Caco-2 (cell line): ENCODE measurements at regions of chr4 and their contacts with region 1.

Region 1: DNA sequence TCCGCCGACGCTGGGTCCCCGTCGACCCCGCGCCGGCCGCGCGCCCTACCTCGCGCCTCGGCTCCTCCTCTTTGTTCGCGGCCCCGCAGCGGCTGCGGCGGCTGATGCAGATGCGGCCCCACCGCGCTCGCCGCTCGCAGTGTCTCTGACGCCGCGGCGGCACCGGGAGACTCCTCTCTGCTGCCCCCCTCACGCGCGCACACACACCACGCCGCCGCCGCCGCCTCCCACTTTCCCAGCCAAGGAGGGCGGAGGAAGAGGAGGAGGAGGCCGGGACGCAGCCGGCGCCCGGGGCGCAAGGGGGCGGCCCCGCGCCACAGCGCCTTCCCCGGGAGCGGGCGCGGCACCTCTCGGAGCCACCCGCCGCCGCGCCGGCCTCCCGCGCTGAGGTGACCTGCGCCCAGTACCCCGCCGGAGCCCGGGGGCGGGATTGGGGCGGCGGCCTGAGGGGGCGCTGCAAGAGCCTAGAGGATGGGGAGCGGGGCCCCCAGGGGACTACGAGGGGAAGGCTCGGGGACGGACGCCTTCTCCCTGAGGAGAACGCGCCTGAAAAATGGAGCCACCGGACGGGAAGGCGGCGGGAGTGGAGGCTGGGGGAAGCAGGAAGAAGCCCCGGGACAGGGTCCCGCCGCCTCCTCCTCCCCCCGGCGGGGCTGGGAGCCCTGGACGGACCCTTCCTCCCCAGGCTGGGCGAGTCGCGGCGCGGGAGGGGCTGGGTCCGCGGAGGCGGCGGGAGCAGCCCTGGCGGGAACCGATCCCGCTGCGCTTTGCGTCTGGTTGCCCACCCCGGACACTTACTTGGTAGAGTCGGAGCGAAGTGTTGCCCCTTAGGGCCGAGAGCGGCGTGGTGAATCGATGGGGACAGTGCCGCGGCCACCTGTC is at the start of gene SH3RF1:
- DNase-seq: peak; percentile 88 to 89
- H3K4me3 ChIP-seq: peak within 1 kb of the TSS; percentile 71
- H3K4me3 Mint-ChIP-seq: peak within 1 kb of the TSS; percentile 96
- H3K27ac Mint-ChIP-seq: peak within 1 kb of the TSS; percentile 95
- H3K4me1 ChIP-seq: peaks cover 43% of the 10 kb centered on the region
- H3K4me1 Mint-ChIP-seq: peaks cover 38% of the 10 kb centered on the region
- H3K27me3 ChIP-seq: no peaks in the 10 kb centered on the region
- H3K27me3 Mint-ChIP-seq: no peaks in the 10 kb centered on the region
- CTCF ChIP-seq: peak; percentile 20 to 35
- total RNA-seq, gene SH3RF1: 25.1 and 28.1 TPM in 2 replicates

Region 2: GRCh38 chr4:169069972-169070902 is 200.8 kb before region 1 on chr4:
- CTCF ChIA-PET with region 1: no interaction called
- POLR2A ChIA-PET with region 1: interaction called, 4 read pairs
- intact Hi-C with region 1: loop called (anchors 1 kb)
- DNase-seq: peak; percentile 90 to 93
- H3K4me3 ChIP-seq: no peak overlapping the region
- H3K4me3 Mint-ChIP-seq: peak overlapping the region; percentile 60
- H3K27ac Mint-ChIP-seq: peak overlapping the region; percentile 92
- H3K4me1 ChIP-seq: peaks cover 50% of the 10 kb centered on the region
- H3K4me1 Mint-ChIP-seq: peaks cover 30% of the 10 kb centered on the region
- H3K27me3 ChIP-seq: no peaks in the 10 kb centered on the region
- H3K27me3 Mint-ChIP-seq: no peaks in the 10 kb centered on the region
- CTCF ChIP-seq: no peak

Region 3: DNA sequence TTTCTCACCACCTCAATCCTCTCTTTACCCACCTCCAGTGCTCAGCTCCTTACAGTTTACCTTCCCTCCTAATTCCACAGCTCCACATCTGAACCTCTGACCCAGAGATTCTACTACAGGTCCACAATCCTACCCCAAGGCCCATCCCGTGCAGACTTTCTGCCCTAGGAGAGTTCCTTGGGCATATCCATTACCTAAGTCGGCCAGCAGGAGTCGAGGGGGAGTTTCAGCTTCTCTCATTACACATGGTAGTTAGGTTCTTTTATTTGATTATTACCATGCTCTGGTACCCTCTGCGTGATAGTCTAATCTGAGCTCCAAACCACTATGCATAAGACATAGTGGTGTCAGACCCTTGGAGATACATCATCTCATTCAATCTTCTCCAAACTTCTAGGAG is 118.2 kb before region 1 on chr4:
- CTCF ChIA-PET with region 1: no interaction called
- POLR2A ChIA-PET with region 1: no interaction called
- intact Hi-C with region 1: loop called (anchors 5 kb)
- DNase-seq: no peak
- H3K4me3 ChIP-seq: no peak overlapping the region
- H3K4me3 Mint-ChIP-seq: no peak overlapping the region
- H3K27ac Mint-ChIP-seq: peak overlapping the region; percentile 74
- H3K4me1 ChIP-seq: peaks cover 44% of the 10 kb centered on the region
- H3K4me1 Mint-ChIP-seq: peaks cover 19% of the 10 kb centered on the region
- H3K27me3 ChIP-seq: no peaks in the 10 kb centered on the region
- H3K27me3 Mint-ChIP-seq: no peaks in the 10 kb centered on the region
- CTCF ChIP-seq: no peak

Region 4: DNA sequence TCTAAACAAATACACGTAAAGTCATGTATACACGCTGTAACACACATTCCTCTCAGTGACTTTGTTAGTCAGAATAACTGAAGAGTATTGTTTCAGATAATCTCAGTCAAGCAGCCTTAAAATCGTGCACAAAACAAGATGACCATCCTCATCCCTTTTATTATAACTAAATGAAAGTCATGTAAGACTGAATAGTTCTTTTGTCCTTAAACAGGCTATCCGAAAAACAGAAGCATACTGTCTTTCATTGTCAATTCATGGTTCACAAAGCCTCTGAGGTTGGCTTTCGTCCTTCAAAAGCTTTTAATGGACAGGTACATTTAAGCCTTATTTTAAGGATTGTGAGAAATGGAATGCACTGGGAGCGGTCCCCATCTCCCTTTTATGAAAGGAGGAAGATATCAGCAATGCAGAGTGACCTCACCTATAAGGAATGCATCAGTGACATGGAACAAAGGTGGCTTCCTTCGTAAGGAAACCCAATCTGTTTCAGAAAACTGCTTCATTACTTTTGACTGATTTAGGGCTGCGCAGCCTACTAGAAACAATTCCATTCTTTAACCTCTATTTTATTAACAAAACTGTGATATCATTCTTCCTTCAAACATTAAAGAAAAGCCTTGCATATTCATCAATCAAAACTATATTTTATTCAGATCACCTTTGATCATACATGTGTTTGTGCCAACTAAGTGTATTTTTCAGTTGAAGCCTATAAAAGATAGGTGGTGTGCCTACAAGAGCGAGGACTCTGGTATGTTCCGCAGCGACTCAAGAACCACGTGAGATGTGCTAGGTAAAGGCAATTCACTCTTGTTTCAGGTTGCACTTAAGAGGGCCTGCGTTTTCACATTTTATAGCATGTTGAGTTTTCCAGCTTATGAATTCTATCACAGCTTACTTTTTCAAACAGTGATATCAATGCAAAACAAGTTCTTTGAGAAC is 19.5 kb before region 1 on chr4:
- CTCF ChIA-PET with region 1: no interaction called
- POLR2A ChIA-PET with region 1: interaction called, 5 read pairs
- intact Hi-C with region 1: loop called (anchors 1 kb)
- DNase-seq: peak; percentile 68
- H3K4me3 ChIP-seq: no peak overlapping the region; the same call in 1 of the 2 replicates
- H3K4me3 Mint-ChIP-seq: peak overlapping the region; percentile 70
- H3K27ac Mint-ChIP-seq: peak overlapping the region; percentile 98
- H3K4me1 ChIP-seq: peaks cover 75% of the 10 kb centered on the region
- H3K4me1 Mint-ChIP-seq: peaks cover 72% of the 10 kb centered on the region
- H3K27me3 ChIP-seq: no peaks in the 10 kb centered on the region
- H3K27me3 Mint-ChIP-seq: no peaks in the 10 kb centered on the region
- CTCF ChIP-seq: no peak